Right cardiac atrium (tissue), 5 donors: ENCODE measurements at regions of chr19 and their contacts with region 1.

Region 1: GRCh38 chr19:28466107-28467045 is 746.6 kb downstream of the UQCRFS1 start:
- DNase-seq: peak; percentile 49 to 84 (median 66)
- ATAC-seq: no peak
- H3K4me3 ChIP-seq: no peak overlapping the region
- H3K27ac ChIP-seq: no peak overlapping the region
- H3K4me1 ChIP-seq: no peaks in the 10 kb centered on the region
- H3K27me3 ChIP-seq: no peaks in the 10 kb centered on the region

Region 2: GRCh38 chr19:28372576-28373247 is 93.7 kb before region 1 on chr19:
- intact Hi-C with region 1: no loop called
- DNase-seq: no peak
- ATAC-seq: no peak
- H3K4me3 ChIP-seq: no peak overlapping the region
- H3K27ac ChIP-seq: no peak overlapping the region
- H3K4me1 ChIP-seq: no peaks in the 10 kb centered on the region
- H3K27me3 ChIP-seq: no peaks in the 10 kb centered on the region

Region 3: GRCh38 chr19:28619816-28620429 is 153.5 kb after region 1 on chr19:
- intact Hi-C with region 1: loop called in 1 of 4 experiments (anchors 5 kb)
- DNase-seq: no peak
- ATAC-seq: no peak
- H3K4me3 ChIP-seq: no peak overlapping the region
- H3K27ac ChIP-seq: no peak overlapping the region
- H3K4me1 ChIP-seq: no peaks in the 10 kb centered on the region
- H3K27me3 ChIP-seq: no peaks in the 10 kb centered on the region

Region 4: DNA sequence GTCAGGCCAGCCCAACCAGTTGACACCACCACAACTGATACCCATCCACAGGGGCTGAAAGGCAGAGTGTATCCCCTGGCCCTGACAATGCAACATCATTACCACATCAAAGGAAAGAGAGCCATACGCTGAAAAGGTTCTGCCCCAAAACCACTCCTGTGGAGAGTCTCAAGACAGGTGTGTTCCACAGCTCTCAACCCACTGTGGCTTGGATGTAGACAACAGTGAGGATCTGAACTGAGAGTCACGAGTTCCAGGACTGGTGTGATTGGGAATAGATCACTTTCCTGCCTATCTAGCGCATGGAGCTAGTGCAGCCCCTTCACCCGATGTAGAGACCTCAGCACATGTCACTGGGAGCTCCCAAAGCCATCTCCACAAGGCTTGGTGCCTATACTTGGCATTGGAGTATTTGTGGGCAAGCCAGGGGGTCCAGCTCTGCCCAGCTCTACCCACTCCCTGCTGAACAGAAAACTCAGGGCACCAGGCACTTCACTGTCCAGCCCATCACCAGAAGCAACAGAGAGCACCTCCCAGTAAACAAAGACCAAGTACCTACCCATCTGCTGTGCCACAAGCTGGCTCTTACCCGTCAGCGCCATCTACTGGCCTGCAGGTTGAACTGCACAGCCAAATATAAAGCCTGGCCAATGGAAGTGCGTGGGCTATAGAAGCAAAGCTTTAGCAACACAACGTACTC is 167.1 kb after region 1 on chr19:
- intact Hi-C with region 1: loop called in 1 of 4 experiments (anchors 10 kb)
- DNase-seq: no peak
- ATAC-seq: peak in 1 of 2 donors; percentile 36
- H3K4me3 ChIP-seq: no peak overlapping the region
- H3K27ac ChIP-seq: no peak overlapping the region
- H3K4me1 ChIP-seq: no peaks in the 10 kb centered on the region
- H3K27me3 ChIP-seq: no peaks in the 10 kb centered on the region

Region 5: GRCh38 chr19:28705008-28705407 is 238.6 kb after region 1 on chr19:
- intact Hi-C with region 1: loop called (anchors 5 to 10 kb)
- DNase-seq: no peak
- ATAC-seq: no peak
- H3K4me3 ChIP-seq: no peak overlapping the region
- H3K27ac ChIP-seq: no peak overlapping the region
- H3K4me1 ChIP-seq: no peaks in the 10 kb centered on the region
- H3K27me3 ChIP-seq: no peaks in the 10 kb centered on the region

Region 6: GRCh38 chr19:28710278-28710677 is 243.9 kb after region 1 on chr19:
- intact Hi-C with region 1: loop called in 3 of 4 experiments (anchors 5 to 10 kb)
- DNase-seq: no peak
- ATAC-seq: no peak
- H3K4me3 ChIP-seq: no peak overlapping the region
- H3K27ac ChIP-seq: no peak overlapping the region
- H3K4me1 ChIP-seq: no peaks in the 10 kb centered on the region
- H3K27me3 ChIP-seq: no peaks in the 10 kb centered on the region

Region 7: DNA sequence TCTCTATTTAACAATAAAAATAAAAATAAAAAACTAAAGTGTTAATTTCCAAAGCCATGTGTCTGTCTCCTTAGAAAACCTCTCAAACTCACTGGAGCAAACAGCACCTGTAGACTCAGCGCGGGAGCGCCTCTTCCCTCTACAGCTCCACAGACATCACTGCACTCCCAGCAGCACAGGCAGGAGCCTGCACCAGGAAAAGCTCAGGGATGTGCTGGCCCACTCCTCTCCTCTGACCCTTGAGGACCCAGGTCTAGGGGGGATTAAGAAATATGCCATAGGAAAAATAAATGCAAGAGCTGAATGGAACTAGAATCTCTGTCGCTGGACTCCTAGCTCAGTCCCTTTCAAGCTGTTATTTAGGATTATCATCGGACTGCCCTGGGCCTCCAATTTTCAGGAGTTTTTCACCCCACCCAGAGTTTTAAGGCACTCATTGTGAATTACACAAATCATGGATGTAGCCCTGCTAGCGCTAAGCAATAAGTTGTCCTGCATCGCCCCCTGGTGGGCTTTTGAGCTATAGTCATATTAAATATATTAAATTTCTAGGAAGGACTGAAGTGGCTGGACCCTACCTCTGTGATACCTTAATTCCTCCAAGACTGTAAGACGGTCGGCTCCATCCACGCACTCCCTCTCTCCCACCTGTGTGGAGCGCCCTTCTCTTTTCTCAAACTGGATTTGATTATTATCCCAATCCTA is 412.6 kb after region 1 on chr19:
- intact Hi-C with region 1: loop called in 3 of 4 experiments (anchors 5 kb)
- DNase-seq: peak; percentile 66 to 84 (median 79)
- ATAC-seq: peak in 1 of 2 donors; percentile 58
- H3K4me3 ChIP-seq: no peak overlapping the region
- H3K27ac ChIP-seq: no peak overlapping the region
- H3K4me1 ChIP-seq: no peaks in the 10 kb centered on the region
- H3K27me3 ChIP-seq: no peaks in the 10 kb centered on the region